ENCODE measurements at regions of chr1 and their contacts with region 1.

Region 1: GRCh38 chr1:1019122-1019999 is 559 bp upstream of the AGRN start:
- DNase-seq: peak; percentile 67 to 81 (median 74)
- H3K4me3 ChIP-seq: peak overlapping the region in 1 of 2 donors; percentile 43
- H3K4me3 Mint-ChIP-seq: peak overlapping the region; percentile 29 to 67 (median 52)
- H3K27ac ChIP-seq: no peak overlapping the region
- H3K27ac Mint-ChIP-seq: peak overlapping the region in 3 of 7 donors; percentile 7 to 75 (median 29)
- H3K4me1 ChIP-seq: peaks cover 19% of the 10 kb centered on the region
- H3K4me1 Mint-ChIP-seq: peaks cover 4 to 24% (median 14%) of the 10 kb centered on the region in 4 donors
- H3K27me3 ChIP-seq: no peaks in the 10 kb centered on the region
- H3K27me3 Mint-ChIP-seq: peaks cover 2 to 4% of the 10 kb centered on the region in 2 donors

Region 2: DNA sequence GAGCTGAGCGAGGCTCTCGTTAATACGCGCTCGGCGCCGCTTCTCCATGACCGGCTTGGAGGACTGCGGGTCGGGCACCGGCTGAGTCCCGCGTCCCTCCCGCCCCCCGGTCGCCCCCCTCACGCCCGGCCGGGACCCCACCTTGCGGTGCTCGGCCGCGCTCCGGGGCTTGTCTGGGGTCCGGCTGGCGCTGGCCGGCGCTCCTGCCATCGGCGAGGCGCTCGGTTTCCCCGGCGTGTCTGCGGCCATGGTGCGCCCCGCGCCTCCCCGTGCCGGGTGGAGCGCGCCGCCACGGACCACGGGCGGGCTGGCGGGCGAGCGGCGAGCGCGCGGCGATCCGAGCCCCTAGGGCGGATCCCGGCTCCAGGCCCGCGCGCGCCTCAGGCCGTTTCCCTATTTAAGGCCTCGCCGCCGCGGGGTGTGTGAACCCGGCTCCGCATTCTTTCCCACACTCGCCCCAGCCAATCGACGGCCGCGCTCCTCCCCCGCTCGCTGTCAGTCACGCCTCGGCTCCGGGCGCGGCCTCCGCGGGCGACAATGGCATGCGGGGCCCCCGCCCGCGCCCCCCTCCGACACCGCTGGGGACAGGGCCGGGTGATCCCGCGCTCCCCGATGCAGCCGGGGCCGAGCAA is 19.5 kb before region 1 on chr1 and contains the start of gene HES4:
- CTCF ChIA-PET with region 1: interaction called, 35 read pairs
- POLR2A ChIA-PET with region 1: interaction called, 16 read pairs
- intact Hi-C with region 1: no loop called
- DNase-seq: peak; percentile 51 to 61 (median 58)
- H3K4me3 ChIP-seq: peak within 1 kb of the TSS; percentile 3 to 44
- H3K4me3 Mint-ChIP-seq: peak within 1 kb of the TSS; percentile 64 to 91 (median 76)
- H3K27ac ChIP-seq: no peak within 1 kb of the TSS
- H3K27ac Mint-ChIP-seq: peak within 1 kb of the TSS; percentile 85 to 94 (median 89)
- H3K4me1 ChIP-seq: peaks cover 29% of the 10 kb centered on the region
- H3K4me1 Mint-ChIP-seq: peaks cover 7 to 24% (median 9%) of the 10 kb centered on the region in 4 donors
- H3K27me3 ChIP-seq: peaks cover 39% of the 10 kb centered on the region
- H3K27me3 Mint-ChIP-seq: peaks cover 21 to 29% of the 10 kb centered on the region in 2 donors
- total RNA-seq, gene HES4: not detected

Region 3: GRCh38 chr1:1091663-1092478 is 72.5 kb after region 1 on chr1:
- CTCF ChIA-PET with region 1: no interaction called
- POLR2A ChIA-PET with region 1: no interaction called
- intact Hi-C with region 1: no loop called
- DNase-seq: no peak
- H3K4me3 ChIP-seq: no peak overlapping the region
- H3K4me3 Mint-ChIP-seq: no peak overlapping the region
- H3K27ac ChIP-seq: no peak overlapping the region
- H3K27ac Mint-ChIP-seq: no peak overlapping the region
- H3K4me1 ChIP-seq: no peaks in the 10 kb centered on the region
- H3K4me1 Mint-ChIP-seq: no peaks in the 10 kb centered on the region
- H3K27me3 ChIP-seq: no peaks in the 10 kb centered on the region
- H3K27me3 Mint-ChIP-seq: no peaks in the 10 kb centered on the region

Measured in CD4-positive, alpha-beta memory T cell (primary cell).